H1 (cell line): ENCODE measurements at regions of chr12 and their contacts with region 1.

Region 1: DNA sequence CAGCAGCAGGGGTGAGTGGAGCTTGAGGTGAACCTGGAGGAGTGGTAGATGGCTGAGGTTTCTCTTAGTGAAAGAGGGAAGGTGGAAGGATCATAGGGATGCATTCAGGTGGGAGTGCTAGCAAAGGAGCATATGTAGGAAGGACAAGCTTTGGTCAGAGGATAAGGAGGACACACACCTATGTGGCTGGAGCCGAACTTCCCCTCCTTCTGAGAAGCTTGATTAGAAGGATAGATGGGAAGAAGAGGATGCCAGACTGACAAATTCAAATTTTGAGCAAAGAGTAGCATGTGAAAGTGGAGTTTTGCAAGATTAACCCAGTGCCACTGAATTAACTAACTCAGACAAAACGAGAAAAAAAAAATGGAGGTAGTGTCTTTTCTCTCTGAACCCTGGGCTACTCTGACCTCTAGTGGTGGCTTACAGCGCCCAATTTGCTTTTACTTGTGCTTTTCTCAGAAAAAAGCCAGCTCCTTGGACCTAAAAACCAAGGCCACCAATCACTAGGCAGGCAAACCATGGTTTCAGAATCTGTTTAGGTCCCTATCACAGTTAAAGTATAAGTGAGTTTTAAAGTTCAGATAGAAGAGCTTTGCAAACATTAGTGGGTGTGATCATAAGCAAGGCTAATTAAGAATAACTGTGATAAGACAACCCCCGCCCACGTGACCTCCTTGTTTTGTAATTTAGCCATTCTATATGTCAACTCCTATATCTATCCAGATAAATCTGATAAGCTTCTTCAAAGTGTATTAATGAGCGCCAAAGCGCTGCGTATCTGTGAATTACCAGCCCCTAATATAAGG is 15.5 kb downstream of the EMP1 start:
- DNase-seq: peak in 1 of 2 experiments; percentile 73
- H3K4me3 ChIP-seq: no peak overlapping the region
- H3K27ac ChIP-seq: no peak overlapping the region
- H3K4me1 ChIP-seq: peaks cover 3 to 10% (median 5%) of the 10 kb centered on the region in 4 experiments; a peak in 4 of 7 replicates
- H3K27me3 ChIP-seq: no peaks in the 10 kb centered on the region
- CTCF ChIP-seq: peak in 2 of 3 experiments; percentile 77 to 78; a peak in 3 of 4 replicates
- EP300 ChIP-seq: no peak
- POLR2A ChIP-seq: no peak
- RAD21 ChIP-seq: peak; percentile 90

Region 2: DNA sequence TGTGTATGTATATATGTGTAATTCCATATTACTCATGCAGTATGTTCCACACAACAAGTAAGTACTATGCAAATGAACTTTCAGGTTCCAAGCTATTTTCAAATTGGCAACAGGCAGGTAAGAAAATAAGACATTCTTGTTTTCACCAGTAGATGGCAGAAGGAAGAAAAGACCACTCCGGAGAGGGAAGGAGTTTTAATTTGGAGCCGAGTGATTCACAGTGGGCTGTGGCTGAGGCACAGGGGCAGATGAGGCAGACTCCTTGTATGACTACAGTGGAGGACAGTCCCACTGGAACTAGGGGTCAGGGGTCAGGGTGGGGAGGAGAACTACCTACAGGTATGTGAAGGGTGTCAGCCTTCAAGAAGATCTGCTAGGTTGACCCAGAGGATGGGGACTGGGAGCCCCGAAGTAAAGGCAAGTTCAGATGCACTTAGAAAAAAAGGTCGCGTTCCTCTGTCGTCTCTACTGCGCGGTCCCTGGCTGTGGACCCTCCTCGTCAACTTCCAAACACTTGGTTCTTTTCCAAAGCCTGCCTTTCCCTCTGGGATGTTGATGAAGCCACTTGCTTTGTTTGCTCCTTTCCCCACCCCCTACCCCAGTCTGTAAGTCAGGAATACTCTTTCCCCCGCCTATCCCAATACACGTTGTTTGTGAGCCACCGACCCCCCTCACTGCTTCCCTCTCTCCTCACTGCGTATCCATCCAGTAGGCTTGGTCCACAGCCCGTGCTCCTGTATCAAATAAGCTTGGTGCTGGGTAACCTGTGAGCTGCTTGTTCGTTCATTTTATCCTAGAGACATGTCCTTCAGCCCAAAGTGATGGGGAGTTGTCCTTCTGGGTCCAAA is 374.8 kb before region 1 on chr12:
- CTCF ChIA-PET with region 1: interaction called, 20 read pairs
- POLR2A ChIA-PET with region 1: no interaction called
- DNase-seq: peak in 1 of 2 experiments; percentile 51
- H3K4me3 ChIP-seq: no peak overlapping the region
- H3K27ac ChIP-seq: no peak overlapping the region
- H3K4me1 ChIP-seq: peaks cover 0 to 2% (median 0%) of the 10 kb centered on the region in 4 experiments; a peak in 2 of 7 replicates
- H3K27me3 ChIP-seq: no peaks in the 10 kb centered on the region
- CTCF ChIP-seq: peak in 2 of 3 experiments; percentile 45 to 65; a peak in 2 of 4 replicates
- EP300 ChIP-seq: no peak
- POLR2A ChIP-seq: no peak
- RAD21 ChIP-seq: peak; percentile 59 to 60

Region 3: DNA sequence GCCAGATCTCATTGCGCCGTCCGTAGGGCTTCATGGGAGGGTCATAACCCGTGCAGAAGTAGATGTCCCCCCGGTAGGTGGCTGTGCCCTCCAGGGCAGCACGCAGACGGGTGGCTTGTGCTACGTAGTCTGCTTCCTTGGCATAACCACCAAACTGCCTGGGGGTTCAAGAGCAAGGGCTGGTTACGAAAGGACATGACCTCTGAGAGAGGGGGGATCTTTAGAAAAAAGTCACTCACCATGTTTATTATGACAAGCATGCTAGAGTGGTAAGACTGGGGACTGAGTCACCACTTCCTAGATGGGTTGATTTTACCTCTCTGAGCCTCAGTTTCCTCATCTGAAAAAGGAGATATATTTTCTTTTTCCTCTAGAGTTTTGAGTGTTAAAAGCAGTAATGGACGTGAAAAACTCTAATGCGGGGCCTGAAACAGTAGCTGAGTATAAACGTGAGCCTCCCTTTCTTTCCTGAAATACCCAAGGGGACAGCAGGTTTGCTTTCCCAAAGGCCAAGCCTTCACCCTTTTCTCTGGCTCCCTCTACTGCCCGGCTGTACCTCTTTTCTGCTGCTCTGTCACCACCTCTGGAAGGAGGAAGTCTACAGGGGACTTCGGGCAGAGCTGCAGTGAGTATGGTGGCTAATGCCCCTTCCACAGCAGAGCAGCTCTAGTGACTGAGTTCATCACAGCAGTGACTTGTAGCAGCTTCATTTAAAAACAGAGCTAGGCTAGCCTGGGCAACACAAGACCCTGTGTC is 236.6 kb before region 1 on chr12:
- CTCF ChIA-PET with region 1: interaction called, 11 read pairs
- POLR2A ChIA-PET with region 1: no interaction called
- DNase-seq: no peak
- H3K4me3 ChIP-seq: no peak overlapping the region
- H3K27ac ChIP-seq: no peak overlapping the region
- H3K4me1 ChIP-seq: peaks cover 0 to 3% (median 0%) of the 10 kb centered on the region in 4 experiments; a peak in 1 of 7 replicates
- H3K27me3 ChIP-seq: no peaks in the 10 kb centered on the region
- CTCF ChIP-seq: peak; percentile 60 to 80 (median 73)
- EP300 ChIP-seq: no peak
- POLR2A ChIP-seq: no peak
- RAD21 ChIP-seq: peak; percentile 75 to 84

Region 4: GRCh38 chr12:13079440-13079906 is 132.6 kb before region 1 on chr12:
- CTCF ChIA-PET with region 1: interaction called, 18 read pairs
- POLR2A ChIA-PET with region 1: no interaction called
- DNase-seq: peak in 1 of 2 experiments; percentile 19
- H3K4me3 ChIP-seq: no peak overlapping the region
- H3K27ac ChIP-seq: no peak overlapping the region
- H3K4me1 ChIP-seq: peaks cover 0 to 5% (median 2%) of the 10 kb centered on the region in 4 experiments; a peak in 3 of 7 replicates
- H3K27me3 ChIP-seq: no peaks in the 10 kb centered on the region
- CTCF ChIP-seq: peak; percentile 34 to 85 (median 72)
- EP300 ChIP-seq: no peak
- POLR2A ChIP-seq: no peak
- RAD21 ChIP-seq: peak; percentile 50 to 68

Region 5: DNA sequence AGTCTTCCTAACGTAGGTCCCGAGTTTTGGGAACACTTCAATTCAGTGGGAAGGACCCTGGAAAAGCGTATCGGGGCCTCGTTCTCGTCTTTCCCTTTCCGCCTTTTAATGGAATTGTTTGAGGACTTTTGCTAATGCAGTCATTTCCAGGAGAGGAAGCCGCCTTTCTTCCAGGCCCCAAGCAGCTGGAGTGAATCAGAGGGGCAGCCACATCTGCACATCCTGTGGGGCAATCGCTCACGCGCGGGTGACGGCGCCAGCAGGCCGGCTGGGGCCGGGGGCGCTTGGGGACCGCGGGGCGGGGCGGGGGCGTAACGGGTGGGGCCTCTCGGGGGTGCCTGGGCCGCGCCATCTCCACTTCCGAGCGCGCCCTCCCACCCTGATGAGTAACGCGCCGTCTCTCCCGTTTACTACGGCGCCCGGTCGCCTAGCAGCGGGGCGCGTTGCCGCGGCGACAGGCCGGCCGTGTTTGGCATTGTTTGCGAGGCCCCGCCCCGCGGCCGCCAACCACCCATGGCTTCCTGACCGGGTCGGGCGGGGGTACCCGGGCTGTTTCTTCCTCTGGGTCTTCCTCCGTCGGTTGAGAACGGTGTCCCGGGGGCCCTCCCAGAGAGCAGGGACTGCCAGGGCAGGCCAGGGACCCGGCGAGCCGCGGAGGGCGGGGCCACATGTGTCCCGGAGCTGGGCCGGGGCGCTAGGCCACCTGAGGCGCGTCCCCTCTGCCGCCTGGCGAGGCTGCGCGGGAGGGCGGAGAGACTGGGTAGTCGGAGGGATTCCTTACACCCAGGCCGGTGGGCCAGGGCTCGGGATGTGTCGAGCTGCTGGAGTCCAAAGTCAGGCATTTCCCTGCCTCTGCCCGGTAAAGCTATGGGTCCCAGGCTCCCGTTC is 110.9 kb before region 1 on chr12:
- CTCF ChIA-PET with region 1: interaction called, 63 read pairs
- POLR2A ChIA-PET with region 1: interaction called, 3 read pairs
- DNase-seq: peak; percentile 47 to 92
- H3K4me3 ChIP-seq: peak overlapping the region; percentile 61 to 72 (median 64)
- H3K27ac ChIP-seq: peak overlapping the region; percentile 70
- H3K4me1 ChIP-seq: peaks cover 5 to 21% (median 14%) of the 10 kb centered on the region in 4 experiments; a peak in 6 of 7 replicates
- H3K27me3 ChIP-seq: no peaks in the 10 kb centered on the region
- CTCF ChIP-seq: no peak
- EP300 ChIP-seq: 0 out of 3 replicates have a peak, but pooled peaks of 1 of the 2 experiments have one; percentile 34
- POLR2A ChIP-seq: peak; percentile 28 to 61; a peak in 2 of 3 replicates
- RAD21 ChIP-seq: no peak

Region 6: DNA sequence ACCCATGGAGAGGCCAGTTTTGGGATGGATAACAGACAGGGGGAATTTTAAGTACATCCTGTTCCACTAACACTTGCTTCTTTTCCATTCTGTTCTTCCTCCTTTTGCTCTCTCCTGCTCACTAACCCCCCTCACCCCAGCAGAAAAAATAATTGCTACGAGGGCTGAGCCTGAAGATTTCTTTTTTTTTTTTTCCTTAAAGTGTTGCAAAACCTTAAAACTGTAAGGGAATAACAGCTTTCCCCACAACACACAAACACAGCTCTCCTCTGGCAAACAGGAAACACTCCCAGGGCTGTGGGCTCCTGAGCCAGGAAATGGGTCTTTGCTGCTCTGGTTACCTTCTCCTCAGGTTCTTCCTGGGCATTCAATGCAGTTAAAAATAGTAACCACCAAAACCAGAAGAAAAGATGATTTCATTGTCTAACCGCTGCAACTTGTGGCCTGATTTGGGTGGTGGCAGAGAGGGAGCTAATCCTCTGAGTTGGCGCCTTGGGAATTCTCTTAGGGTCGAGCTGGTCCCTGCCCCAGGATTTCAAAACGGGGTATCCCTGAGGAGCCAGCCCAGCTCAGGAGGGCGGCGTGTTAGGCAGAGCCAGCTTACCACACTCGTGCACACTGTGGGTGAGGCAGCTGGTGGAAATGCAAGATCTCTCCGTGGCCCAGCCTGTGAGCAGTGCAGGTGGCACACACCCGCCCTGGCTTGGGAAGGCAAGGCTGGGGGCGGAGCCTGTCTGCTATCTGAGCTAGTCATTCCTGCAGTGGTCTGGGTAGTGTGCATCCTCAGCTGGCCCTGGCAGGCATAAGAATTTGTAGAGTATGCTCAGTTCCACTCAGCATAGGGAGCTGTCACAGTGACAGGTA is 32.6 kb before region 1 on chr12:
- CTCF ChIA-PET with region 1: interaction called, 12 read pairs
- POLR2A ChIA-PET with region 1: no interaction called
- DNase-seq: peak in 1 of 2 experiments; percentile 80
- H3K4me3 ChIP-seq: peak overlapping the region in 3 of 4 experiments; percentile 14 to 37 (median 26); a peak in 4 of 8 replicates
- H3K27ac ChIP-seq: no peak overlapping the region
- H3K4me1 ChIP-seq: peaks cover 0 to 11% (median 4%) of the 10 kb centered on the region in 4 experiments; a peak in 6 of 7 replicates
- H3K27me3 ChIP-seq: no peaks in the 10 kb centered on the region; a peak in 1 of 7 replicates
- CTCF ChIP-seq: no peak
- EP300 ChIP-seq: no peak
- POLR2A ChIP-seq: no peak
- RAD21 ChIP-seq: no peak

Region 7: GRCh38 chr12:13233830-13234641 is 22.0 kb after region 1 on chr12:
- CTCF ChIA-PET with region 1: interaction called, 24 read pairs
- POLR2A ChIA-PET with region 1: no interaction called
- DNase-seq: peak; percentile 13 to 69
- H3K4me3 ChIP-seq: no peak overlapping the region
- H3K27ac ChIP-seq: no peak overlapping the region
- H3K4me1 ChIP-seq: no peaks in the 10 kb centered on the region
- H3K27me3 ChIP-seq: no peaks in the 10 kb centered on the region
- CTCF ChIP-seq: peak in 2 of 3 experiments; percentile 84 to 93; a peak in 3 of 4 replicates
- EP300 ChIP-seq: no peak
- POLR2A ChIP-seq: no peak
- RAD21 ChIP-seq: peak; percentile 87 to 91